Activated CD4-positive, alpha-beta T cell treated with anti-CD3 and anti-CD28 coated beads, Interleukin-2, amount 10 ng/mL, durations not matched to agents 24 days and 14 days (primary cell): ENCODE measurements at regions of chr16 and their contacts with region 1.

Region 1: GRCh38 chr16:12455287-12455798 is 348.3 kb downstream of the CPPED1 start:
- DNase-seq: peak; percentile 83
- H3K4me3 Mint-ChIP-seq: no peak overlapping the region
- H3K27ac Mint-ChIP-seq: no peak overlapping the region
- H3K4me1 Mint-ChIP-seq: peaks cover 21% of the 10 kb centered on the region
- H3K27me3 Mint-ChIP-seq: no peaks in the 10 kb centered on the region

Region 2: DNA sequence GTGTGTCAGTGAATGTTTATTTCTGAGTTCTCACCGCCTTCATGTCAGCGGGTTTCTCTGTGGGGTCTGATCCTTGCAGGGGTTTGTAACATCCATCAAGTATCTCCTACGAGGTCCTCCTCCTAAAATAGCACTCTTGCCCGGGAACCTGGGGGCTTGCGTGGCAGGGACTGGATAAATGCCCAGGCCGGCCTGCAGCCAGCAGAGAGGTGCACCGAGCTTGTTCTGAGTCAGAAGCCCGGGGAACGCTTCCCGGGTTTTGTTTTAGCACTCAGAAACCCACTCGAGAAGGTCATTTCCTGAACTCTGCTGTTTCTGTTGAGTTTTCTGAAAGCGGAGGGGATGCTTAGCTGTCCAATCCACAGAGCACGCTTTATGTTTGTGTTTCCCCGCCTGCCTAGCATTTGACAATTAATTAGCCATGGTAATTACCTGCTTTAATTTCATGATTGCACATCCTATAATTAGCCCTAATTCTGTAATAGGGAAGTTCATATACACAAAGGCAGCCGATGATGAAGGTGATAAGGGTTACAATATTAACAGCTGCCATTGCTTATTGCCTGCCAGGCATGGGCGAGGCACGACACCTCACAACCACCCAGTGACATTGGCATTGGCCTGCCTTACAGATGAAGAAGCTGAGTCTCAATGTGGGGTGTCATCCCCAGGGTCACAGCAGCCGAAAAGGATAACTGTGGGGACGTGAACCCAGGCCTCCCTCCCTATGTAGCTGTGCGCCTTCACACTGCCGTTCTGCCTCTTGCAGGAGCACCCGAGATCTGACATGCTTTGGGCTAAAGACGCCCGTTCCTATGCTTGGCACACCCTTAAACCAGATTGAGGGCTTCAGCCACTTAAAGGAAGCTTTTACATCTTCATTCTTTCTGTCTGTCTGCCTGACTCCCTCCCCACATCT is 15.2 kb after region 1 on chr16:
- intact Hi-C with region 1: no loop called
- DNase-seq: no peak
- H3K4me3 Mint-ChIP-seq: no peak overlapping the region
- H3K27ac Mint-ChIP-seq: no peak overlapping the region
- H3K4me1 Mint-ChIP-seq: no peaks in the 10 kb centered on the region
- H3K27me3 Mint-ChIP-seq: no peaks in the 10 kb centered on the region

Region 3: DNA sequence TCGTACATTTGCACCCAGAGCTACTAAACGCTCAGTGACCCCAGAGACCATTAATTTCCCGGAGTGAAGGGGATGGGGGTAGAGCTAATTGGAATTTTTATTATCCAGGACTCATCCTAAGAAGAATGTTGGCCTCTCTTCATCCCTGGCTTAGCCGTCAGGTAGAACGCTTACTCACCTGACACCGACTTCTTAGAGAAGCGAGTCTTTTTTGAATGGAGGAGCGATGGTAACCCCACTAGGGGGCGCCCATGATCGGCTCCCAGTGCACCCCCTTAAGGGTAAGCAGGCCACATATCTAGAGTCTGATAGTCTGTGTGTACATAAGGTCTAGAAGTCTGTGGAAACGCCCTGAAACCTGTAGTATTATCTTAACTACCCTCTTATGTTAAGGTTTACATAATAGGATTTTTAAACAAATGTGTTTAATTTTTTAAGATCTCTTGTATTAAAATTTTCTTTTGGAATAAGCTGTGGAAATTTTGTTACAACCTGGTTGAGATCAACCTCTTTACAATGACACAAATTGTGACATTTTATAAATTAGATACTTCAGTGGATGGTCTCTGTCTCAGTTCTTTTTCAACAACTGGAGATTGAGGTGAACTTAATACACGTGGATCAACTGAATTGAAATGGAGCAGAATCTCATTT is 118.5 kb after region 1 on chr16:
- intact Hi-C with region 1: loop called (anchors 5 kb)
- DNase-seq: peak; percentile 86
- H3K4me3 Mint-ChIP-seq: no peak overlapping the region
- H3K27ac Mint-ChIP-seq: no peak overlapping the region
- H3K4me1 Mint-ChIP-seq: peaks cover 11% of the 10 kb centered on the region
- H3K27me3 Mint-ChIP-seq: no peaks in the 10 kb centered on the region

Region 4: GRCh38 chr16:13453938-13454553 is 998.7 kb after region 1 on chr16:
- intact Hi-C with region 1: loop called (anchors 10 kb)
- DNase-seq: peak; percentile 68
- H3K4me3 Mint-ChIP-seq: no peak overlapping the region
- H3K27ac Mint-ChIP-seq: no peak overlapping the region
- H3K4me1 Mint-ChIP-seq: no peaks in the 10 kb centered on the region
- H3K27me3 Mint-ChIP-seq: no peaks in the 10 kb centered on the region